Activated naive CD8-positive, alpha-beta T cell treated with anti-CD3 and anti-CD28 coated beads, Interleukin-2, amount 10 ng/mL, durations not matched to agents 7 days and 5 days (primary cell): ENCODE measurements at regions of chr5 and their contacts with region 1.

Region 1: DNA sequence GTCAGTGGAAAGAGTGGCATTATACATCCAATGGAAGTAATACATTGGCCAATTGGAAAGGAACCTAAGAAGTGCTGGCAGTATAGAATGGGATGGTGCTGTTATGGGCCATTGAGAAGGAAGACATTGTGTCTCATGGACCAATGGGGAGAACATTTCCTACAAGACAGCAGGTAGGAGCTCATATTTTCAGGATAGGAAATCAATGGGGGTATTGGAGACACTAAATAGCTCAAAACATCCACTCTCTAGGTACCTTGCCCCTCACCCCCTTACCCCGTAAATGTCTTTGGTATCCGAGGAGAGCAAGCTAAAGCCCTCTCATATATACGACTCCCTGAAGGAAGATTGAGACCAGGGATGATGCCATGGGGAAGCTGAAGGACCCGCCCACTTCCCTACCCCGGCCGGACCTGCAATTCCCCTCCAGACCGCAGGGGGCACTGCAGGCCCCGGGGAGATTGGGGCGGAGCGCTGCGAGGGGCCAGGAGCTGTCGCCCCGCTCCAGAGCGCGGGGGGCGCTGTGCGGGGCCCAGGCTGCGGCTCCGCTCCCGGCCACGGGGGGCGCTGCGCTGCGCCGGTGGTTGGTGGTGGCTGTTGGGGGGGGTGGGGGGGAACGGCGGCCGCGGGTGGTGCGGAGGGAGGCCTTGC is at the start of gene KDM3B:
- DNase-seq: peak; percentile 99
- ATAC-seq: peak; percentile 74
- H3K4me3 Mint-ChIP-seq: peak within 1 kb of the TSS; percentile 93
- H3K27ac Mint-ChIP-seq: peak within 1 kb of the TSS; percentile 89
- H3K4me1 Mint-ChIP-seq: peaks cover 36% of the 10 kb centered on the region
- H3K27me3 Mint-ChIP-seq: no peaks in the 10 kb centered on the region
- total RNA-seq, gene KDM3B: 63.0 to 70.8 TPM

Region 2: GRCh38 chr5:138213161-138214029 is 138.8 kb before region 1 on chr5 and contains the start of gene CDC23:
- POLR2A ChIA-PET with region 1: interaction called, 17 read pairs
- DNase-seq: peak; percentile 81
- ATAC-seq: peak; percentile 98
- H3K4me3 Mint-ChIP-seq: peak within 1 kb of the TSS; percentile 98
- H3K27ac Mint-ChIP-seq: peak within 1 kb of the TSS; percentile 96
- H3K4me1 Mint-ChIP-seq: peaks cover 20% of the 10 kb centered on the region
- H3K27me3 Mint-ChIP-seq: peaks cover 2% of the 10 kb centered on the region
- total RNA-seq, gene CDC23: 33.0 to 34.4 TPM

Region 3: GRCh38 chr5:138282920-138283742 is 69.1 kb before region 1 on chr5:
- POLR2A ChIA-PET with region 1: no interaction called
- DNase-seq: no peak
- ATAC-seq: peak; percentile 67
- H3K4me3 Mint-ChIP-seq: no peak overlapping the region
- H3K27ac Mint-ChIP-seq: no peak overlapping the region
- H3K4me1 Mint-ChIP-seq: no peaks in the 10 kb centered on the region
- H3K27me3 Mint-ChIP-seq: no peaks in the 10 kb centered on the region

Region 4: DNA sequence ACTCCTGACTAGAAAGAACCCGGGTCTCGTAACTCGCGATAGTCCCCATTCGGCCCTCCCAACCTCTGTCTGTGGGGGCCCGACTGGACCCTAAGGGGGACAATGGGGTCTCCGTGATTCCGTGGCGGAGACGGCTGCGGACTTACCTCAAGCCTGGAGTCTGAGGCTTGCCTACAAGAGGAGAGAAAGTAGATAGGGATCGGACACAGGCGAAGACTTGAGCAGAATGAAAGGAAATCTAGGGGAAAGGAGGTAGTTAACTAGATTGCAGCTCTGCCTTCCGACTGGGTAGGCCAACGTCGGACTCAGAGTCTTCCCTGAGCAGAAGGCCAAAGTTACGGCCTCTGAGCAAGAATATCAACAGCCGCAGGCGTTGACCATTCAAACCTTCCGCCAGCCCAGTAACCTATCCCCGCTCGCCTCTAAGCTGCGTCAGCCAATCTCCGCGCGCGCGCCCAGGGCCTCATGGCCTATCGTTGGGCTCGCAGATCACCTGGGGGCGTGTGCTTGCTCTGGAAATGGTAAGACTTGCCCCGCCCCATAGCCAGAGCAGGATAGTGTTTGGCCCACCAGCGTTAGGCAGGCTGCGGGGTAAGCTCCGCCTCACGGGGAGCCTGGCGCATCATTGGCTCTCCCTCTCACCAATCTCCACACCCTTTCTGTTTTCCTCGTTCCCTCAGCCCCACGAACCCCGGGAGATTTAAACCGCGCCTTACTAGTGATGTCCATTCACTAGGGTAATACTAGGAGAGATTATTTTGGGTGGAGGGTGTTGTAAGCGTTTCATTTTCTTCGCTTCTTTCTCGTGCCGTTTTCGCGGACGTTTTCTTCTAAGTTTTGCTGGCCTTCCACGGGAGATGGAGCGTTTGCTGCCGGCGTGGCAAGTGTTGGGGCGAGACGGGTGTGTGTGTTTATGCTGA is 20.5 kb before region 1 on chr5 and contains the start of gene CDC25C:
- POLR2A ChIA-PET with region 1: interaction called, 58 read pairs
- DNase-seq: peak; percentile 92
- ATAC-seq: peak; percentile 100
- H3K4me3 Mint-ChIP-seq: peak within 1 kb of the TSS; percentile 87
- H3K27ac Mint-ChIP-seq: peak within 1 kb of the TSS; percentile 92
- H3K4me1 Mint-ChIP-seq: peaks cover 20% of the 10 kb centered on the region
- H3K27me3 Mint-ChIP-seq: peaks cover 2% of the 10 kb centered on the region
- total RNA-seq, gene CDC25C: 11.9 to 13.2 TPM

Region 5: DNA sequence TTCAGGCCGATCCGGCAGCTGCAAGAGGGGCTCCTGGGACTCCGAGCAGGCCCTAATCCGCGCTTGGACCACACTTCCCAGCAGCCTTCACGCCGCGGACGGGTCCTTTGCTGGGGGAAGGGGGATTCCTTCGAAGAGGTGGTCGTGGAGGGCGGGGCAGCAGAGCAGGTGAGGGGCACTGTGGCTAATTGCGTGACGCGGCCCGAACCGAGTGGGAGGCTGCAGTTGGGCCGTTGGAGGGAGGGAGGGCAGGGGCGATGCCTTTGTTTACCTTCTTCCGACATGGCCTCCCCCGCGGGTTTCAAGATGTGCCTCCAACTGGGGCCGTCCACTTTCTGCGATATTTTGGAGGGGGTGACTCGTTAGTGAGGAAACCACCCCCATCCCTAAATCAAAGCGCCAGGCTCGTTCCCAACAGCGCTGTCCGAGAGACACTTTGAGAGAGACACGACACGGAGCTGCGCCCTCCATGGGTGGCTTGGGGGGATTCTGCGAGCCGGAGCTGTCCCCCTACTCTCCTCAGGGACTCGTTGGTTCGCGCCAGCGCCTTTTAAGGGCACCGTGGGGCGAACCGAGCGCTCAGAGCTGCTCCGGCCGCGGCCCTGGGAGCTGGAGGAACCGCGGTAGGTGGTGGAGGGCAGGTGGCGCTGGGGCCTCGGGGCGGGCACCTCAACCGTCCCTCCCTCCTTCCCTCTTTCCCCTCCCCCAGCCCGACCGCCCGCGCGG is 14.3 kb before region 1 on chr5 and contains the start of gene FAM53C:
- POLR2A ChIA-PET with region 1: interaction called, 132 read pairs
- DNase-seq: peak; percentile 97
- ATAC-seq: peak; percentile 88
- H3K4me3 Mint-ChIP-seq: peak within 1 kb of the TSS; percentile 90
- H3K27ac Mint-ChIP-seq: peak within 1 kb of the TSS; percentile 98
- H3K4me1 Mint-ChIP-seq: peaks cover 26% of the 10 kb centered on the region
- H3K27me3 Mint-ChIP-seq: peaks cover 2% of the 10 kb centered on the region
- total RNA-seq, gene FAM53C: 29.3 to 31.2 TPM

Region 6: DNA sequence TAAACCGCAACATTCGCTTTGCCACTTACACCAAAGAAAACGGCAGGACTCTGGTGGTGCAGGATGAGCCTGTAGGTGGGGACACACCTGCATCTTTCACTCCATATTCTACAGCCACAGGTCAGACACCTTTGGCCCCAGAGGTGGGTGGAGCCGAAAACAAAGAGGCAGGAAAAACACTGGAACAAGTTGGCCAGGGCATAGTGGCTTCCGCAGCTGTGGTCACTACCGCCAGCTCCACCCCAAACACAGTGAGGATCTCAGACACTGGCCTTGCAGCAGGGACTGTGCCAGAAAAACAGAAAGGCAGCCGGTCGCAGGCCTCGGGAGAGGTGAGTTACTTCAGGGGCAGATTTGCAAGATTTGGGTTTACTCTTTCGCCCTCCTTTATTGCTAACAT is 34.1 kb after region 1 on chr5:
- POLR2A ChIA-PET with region 1: no interaction called
- DNase-seq: no peak
- ATAC-seq: no peak
- H3K4me3 Mint-ChIP-seq: no peak overlapping the region
- H3K27ac Mint-ChIP-seq: no peak overlapping the region
- H3K4me1 Mint-ChIP-seq: no peaks in the 10 kb centered on the region
- H3K27me3 Mint-ChIP-seq: no peaks in the 10 kb centered on the region